WTC11 (cell line): ENCODE measurements at regions of chr13 and their contacts with region 1.

Region 1: DNA sequence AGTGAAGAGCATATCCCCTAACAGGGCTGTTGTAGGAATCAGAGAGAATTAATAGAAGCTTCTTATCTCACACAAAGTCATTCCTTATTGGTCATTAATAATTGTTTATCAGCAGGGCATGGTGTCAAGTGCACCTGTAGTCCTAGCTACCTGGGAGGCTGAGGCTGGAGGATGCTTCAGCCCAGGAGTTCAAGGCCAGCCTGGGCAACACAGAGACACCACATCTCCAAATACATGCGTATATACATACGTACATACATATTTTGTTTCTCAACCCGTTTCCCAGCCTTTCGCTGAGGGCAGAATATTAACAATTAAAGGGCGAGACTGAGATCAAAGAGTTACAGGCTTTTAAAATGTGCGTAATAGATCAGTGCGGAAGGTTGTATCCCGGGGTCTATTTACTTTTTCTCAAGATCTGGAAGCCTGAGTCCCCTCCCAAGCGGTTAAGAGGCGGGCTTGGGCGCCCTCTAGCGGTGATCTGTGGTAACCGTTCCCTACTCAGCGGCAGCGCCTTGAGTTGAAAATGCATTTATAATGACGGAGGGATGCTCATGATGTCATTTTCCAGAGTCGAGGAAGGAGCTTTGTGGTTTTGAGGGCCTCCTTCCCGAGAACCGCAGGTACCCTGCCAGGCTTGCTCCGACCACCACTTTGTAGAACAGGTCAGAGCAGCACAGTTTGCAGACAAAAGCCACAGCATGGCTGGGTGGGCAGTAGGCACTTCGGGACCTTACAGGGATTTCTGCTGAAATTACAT is 169.6 kb upstream of the GPR12 start:
- DNase-seq: peak; percentile 89
- ATAC-seq: peak; percentile 93
- H3K4me3 Mint-ChIP-seq: peak overlapping the region; percentile 59
- H3K27ac Mint-ChIP-seq: 0 out of 2 replicates have a peak overlapping the region, but pooled peaks have one; percentile 33
- H3K4me1 Mint-ChIP-seq: 0 out of 2 replicates have a peak, but pooled peaks cover 2% of the 10 kb centered on the region
- H3K27me3 Mint-ChIP-seq: no peaks in the 10 kb centered on the region; the same call in 1 of the 2 replicates
- CTCF ChIP-seq: peak; percentile 97

Region 2: GRCh38 chr13:26914624-26915023 is 15.5 kb before region 1 on chr13:
- CTCF ChIA-PET with region 1: interaction called, 15 read pairs
- POLR2A ChIA-PET with region 1: no interaction called
- DNase-seq: no peak
- ATAC-seq: no peak
- H3K4me3 Mint-ChIP-seq: no peak overlapping the region
- H3K27ac Mint-ChIP-seq: no peak overlapping the region
- H3K4me1 Mint-ChIP-seq: peaks cover 4% of the 10 kb centered on the region; the same call in 1 of the 2 replicates
- H3K27me3 Mint-ChIP-seq: no peaks in the 10 kb centered on the region
- CTCF ChIP-seq: no peak

Region 3: GRCh38 chr13:26978081-26978820 is 48.1 kb after region 1 on chr13:
- CTCF ChIA-PET with region 1: no interaction called
- POLR2A ChIA-PET with region 1: no interaction called
- DNase-seq: peak; percentile 52
- ATAC-seq: peak; percentile 94
- H3K4me3 Mint-ChIP-seq: no peak overlapping the region
- H3K27ac Mint-ChIP-seq: peak overlapping the region; percentile 6; the same call in 1 of the 2 replicates
- H3K4me1 Mint-ChIP-seq: peaks cover 19% of the 10 kb centered on the region
- H3K27me3 Mint-ChIP-seq: no peaks in the 10 kb centered on the region
- CTCF ChIP-seq: no peak

Region 4: GRCh38 chr13:27194895-27195764 is 265.0 kb after region 1 on chr13:
- CTCF ChIA-PET with region 1: no interaction called
- POLR2A ChIA-PET with region 1: no interaction called
- DNase-seq: no peak
- ATAC-seq: peak; percentile 79
- H3K4me3 Mint-ChIP-seq: no peak overlapping the region
- H3K27ac Mint-ChIP-seq: no peak overlapping the region
- H3K4me1 Mint-ChIP-seq: peaks cover 17% of the 10 kb centered on the region
- H3K27me3 Mint-ChIP-seq: no peaks in the 10 kb centered on the region
- CTCF ChIP-seq: no peak